ENCODE measurements at regions of chr9 and their contacts with region 1.

Region 1: GRCh38 chr9:7273391-7273974 is 515.7 kb downstream of the KDM4C start:
- DNase-seq: no peak
- CTCF ChIP-seq: no peak

Region 2: DNA sequence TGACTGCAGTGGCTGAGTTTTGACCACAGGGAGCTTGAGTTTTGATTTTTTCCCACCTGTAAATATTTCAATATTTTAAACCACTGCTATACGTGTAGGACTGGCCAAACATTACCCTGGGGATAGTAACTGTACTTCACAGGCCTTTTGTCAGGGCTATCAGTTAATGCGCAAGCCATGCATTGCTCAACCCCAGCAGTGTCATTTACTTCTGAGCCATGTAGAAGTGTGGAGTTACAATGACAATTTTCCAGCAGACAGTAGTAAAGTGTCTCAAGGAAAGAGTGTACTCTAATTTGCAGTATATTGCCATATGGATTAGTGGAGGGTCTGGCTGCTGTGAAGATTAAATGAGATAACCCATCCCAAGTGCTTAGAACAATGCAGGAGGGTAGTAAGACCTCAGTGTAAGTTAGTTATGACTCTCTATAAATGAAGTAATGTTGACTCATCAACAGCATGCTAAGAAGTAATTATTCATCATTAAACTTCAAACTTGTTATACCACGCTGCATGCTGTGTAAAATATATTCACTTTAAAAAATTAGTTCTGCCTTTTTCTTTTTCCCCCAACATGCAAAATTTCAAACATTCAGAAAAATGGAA is 26.5 kb before region 1 on chr9:
- CTCF ChIA-PET with region 1: no interaction called
- POLR2A ChIA-PET with region 1: no interaction called
- DNase-seq: no peak
- CTCF ChIP-seq: no peak

Region 3: DNA sequence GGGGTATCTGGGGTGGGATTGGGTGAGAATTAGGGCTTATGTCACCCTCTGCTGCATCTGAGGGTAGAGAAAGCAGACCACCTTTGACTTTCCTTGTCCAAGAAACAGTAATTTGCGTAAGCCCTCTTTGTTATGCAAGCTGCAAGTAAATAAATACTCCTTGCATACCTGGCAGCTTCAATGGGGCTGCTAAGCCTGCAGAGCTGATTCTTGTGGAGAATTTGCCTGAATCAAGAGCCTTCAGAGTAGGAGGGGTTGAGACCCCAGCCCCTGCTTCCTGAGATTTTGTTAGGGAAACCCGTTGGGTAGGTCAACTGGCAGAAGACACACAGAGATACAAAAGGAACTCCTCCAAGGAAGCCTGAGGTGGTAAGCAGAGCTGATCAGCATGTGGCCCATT is 11.0 kb after region 1 on chr9:
- CTCF ChIA-PET with region 1: interaction called, 10 read pairs
- POLR2A ChIA-PET with region 1: no interaction called
- DNase-seq: no peak
- CTCF ChIP-seq: no peak

Measured in GM10248 (cell line).